Posterior cingulate gyrus (tissue), 11 donors: ENCODE measurements at regions of chr17 and their contacts with region 1.

Region 1: DNA sequence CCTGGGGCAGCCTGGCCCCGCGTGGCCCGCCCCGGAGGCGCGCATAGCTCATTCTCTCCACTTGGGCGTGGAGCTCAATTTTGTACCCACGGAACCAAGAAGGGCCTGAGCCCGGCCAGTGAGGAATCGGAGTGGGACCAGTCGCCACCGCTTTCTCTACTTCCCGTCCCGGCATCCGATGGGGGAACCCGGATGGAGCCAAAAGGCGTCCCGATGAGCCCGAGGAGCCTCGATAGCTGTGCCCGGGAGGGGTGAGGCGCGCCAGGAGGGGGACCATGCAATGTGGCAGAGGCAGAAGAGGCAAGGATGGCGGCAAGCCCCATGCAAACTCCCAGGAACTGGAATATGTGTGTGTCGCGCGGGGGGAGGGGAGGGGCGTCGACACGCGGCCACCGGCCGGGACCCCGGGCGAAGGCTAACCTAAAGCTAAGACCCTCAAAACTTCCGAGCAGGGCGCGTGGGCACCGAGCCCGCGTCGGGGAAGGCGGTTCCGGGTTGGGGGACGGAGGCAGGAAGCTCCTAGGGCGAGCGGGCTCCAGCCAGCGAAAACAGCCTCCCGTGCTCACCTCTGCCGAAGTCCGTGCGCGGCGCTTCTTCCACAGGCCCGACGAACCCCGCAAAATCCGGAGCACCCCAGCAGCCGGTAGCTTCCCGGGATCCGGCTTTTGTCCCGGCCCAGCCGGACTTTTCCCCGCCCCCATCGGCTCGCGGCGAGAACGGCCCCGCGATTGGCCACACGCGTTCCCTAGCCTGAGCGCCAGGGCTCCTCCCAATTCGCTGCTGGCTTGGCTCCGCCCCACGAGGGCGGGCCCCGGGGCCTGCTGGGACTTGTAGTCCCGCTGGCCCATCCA is at the start of gene ACLY:
- DNase-seq: peak; percentile 95 to 100 (median 98)

Region 2: GRCh38 chr17:41844971-41845370 is 73.6 kb before region 1 on chr17:
- intact Hi-C with region 1: no loop called
- DNase-seq: no peak

Region 3: GRCh38 chr17:41864836-41865595 is 53.5 kb before region 1 on chr17 and contains the start of gene KLHL11:
- intact Hi-C with region 1: loop called (anchors 5 kb)
- DNase-seq: peak; percentile 85 to 99 (median 88)

Region 4: DNA sequence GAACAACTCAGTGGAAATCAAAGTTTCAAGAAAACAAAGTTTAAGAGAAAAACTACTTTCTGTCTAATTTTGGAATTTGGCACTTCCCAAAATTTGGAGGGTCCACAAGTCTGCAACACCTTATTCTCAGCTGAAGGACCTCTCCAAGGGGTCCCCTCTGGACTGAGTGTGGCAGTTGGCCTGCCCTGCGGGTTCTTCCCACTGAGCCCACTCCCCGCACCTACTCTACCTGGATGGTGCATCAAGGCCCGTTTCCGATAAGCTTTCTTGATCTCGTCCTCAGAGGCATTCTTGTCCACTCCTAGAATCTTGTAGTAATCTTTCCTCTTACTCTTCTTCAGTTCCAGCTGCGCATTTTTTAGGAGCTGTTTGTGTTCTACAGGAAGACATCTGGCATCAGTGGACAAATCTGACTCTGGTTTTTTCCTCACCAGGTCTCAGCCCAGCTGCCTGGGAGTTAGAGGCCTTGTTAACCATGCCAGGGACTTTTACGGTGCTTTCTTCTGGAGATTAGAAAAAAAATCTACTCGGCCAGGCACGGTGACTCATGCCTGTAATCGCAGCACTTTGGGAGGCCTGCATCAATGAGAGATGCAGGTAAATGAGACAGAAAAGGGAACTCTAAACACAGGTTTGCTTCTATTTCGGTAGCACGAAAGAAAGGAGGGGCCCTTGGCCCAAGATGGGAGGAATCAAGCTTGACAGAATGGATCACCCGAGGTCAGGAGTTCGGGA is 63.7 kb after region 1 on chr17:
- intact Hi-C with region 1: no loop called
- DNase-seq: peak in 2 of 10 donors; percentile 40 to 66